Sigmoid colon (tissue), 7 donors: ENCODE measurements at regions of chr9 and their contacts with region 1.

Region 1: GRCh38 chr9:135961277-135961705 is at the start of gene UBAC1:
- DNase-seq: peak; percentile 98
- H3K4me3 ChIP-seq: peak within 1 kb of the TSS; percentile 86 to 99 (median 98)
- H3K27ac ChIP-seq: peak within 1 kb of the TSS; percentile 93 to 95 (median 94)
- H3K4me1 ChIP-seq: peaks cover 0 to 29% (median 21%) of the 10 kb centered on the region in 4 donors
- H3K27me3 ChIP-seq: no peaks in the 10 kb centered on the region
- CTCF ChIP-seq: peak in 2 of 4 experiments; percentile 16 to 22
- EP300 ChIP-seq: peak in 1 of 4 donors; percentile 61
- POLR2A ChIP-seq: no peak
- total RNA-seq, gene UBAC1: 57.4 to 80.9 (median 67.3) TPM

Region 2: GRCh38 chr9:135907431-135908092 is 53.7 kb before region 1 on chr9 and contains the start of gene CAMSAP1:
- intact Hi-C with region 1: loop called (anchors 1 kb)
- DNase-seq: peak; percentile 96
- H3K4me3 ChIP-seq: peak within 1 kb of the TSS; percentile 80 to 95 (median 88)
- H3K27ac ChIP-seq: peak within 1 kb of the TSS; percentile 77 to 88 (median 84)
- H3K4me1 ChIP-seq: peaks cover 0 to 51% (median 37%) of the 10 kb centered on the region in 4 donors
- H3K27me3 ChIP-seq: no peaks in the 10 kb centered on the region
- CTCF ChIP-seq: no peak
- EP300 ChIP-seq: no peak
- POLR2A ChIP-seq: peak in 1 of 2 donors; percentile 27
- total RNA-seq, gene CAMSAP1: 19.4 to 37.7 (median 21.2) TPM

Region 3: GRCh38 chr9:136245219-136246150 is 284.2 kb after region 1 on chr9 and contains the start of gene QSOX2:
- intact Hi-C with region 1: loop called (anchors 10 kb)
- DNase-seq: peak; percentile 91
- H3K4me3 ChIP-seq: peak within 1 kb of the TSS; percentile 52 to 86 (median 78)
- H3K27ac ChIP-seq: peak within 1 kb of the TSS; percentile 15 to 62 (median 52)
- H3K4me1 ChIP-seq: peaks cover 0 to 21% (median 12%) of the 10 kb centered on the region in 4 donors
- H3K27me3 ChIP-seq: peaks cover 0 to 4% (median 0%) of the 10 kb centered on the region in 3 donors
- CTCF ChIP-seq: no peak
- EP300 ChIP-seq: no peak
- POLR2A ChIP-seq: no peak
- total RNA-seq, gene QSOX2: 3.2 to 6.4 (median 4.8) TPM